ENCODE measurements at regions of chr2 and their contacts with region 1.

Region 1: DNA sequence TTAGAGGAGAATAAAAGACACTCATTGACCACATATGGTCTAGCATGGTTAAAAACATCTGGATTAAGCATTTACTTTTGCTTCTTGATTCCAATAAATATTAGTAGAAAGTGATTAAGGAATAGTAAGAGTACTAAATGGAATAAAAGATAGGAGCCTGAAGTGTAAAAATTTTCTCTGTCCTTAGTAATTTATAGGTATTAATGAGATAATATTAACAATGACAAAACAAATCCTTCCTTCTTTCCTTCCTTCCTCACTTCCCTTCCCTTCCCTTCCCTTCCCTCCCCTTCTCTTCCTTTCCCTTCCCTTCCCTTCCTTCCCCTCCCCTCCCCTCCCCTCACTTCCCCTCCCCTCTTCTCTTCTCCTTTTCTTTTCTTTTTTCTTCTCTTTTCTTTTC is 797.5 kb upstream of the NRXN1 start:
- DNase-seq: no peak

Region 2: DNA sequence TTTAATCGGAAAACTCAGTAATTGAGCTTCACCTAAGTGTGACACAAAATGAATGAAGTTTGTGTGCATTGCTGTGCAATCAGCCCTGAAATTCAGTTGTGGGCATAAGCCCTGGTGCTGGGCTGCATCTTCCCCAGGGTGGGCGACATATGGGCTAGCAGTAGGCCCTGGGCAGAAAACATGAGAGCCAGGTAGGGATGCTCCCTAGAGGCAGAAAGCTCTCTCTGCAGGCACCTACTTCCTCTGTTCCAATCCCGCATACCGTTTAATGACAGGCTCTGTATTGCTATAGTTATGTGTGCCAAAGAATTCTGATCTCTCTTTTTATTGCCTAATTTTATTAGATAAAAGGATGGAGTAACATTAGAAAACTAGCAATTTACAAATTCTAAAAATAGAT is 1254.2 kb before region 1 on chr2:
- intact Hi-C with region 1: loop called in 1 of 2 experiments (anchors 5 kb)
- DNase-seq: no peak

Measured in posterior vena cava (tissue), 2 donors.